Activated T-helper 2 cell treated with anti-CD3 and anti-CD28 coated beads, Interferon-gamma antibody, Interleukin-2, Interleukin-4, amounts not matched to agents 10 μg/mL and 5 μg/mL and 100 μg/mL, durations not matched to agents 14 hours and 24 hours and 36 hours (primary cell): ENCODE measurements at regions of chr21 and their contacts with region 1.

Region 1: GRCh38 chr21:27700974-27701614 is 734.2 kb upstream of the ADAMTS5 start:
- DNase-seq: peak; percentile 37
- H3K4me3 Mint-ChIP-seq: no peak overlapping the region
- H3K27ac Mint-ChIP-seq: no peak overlapping the region
- H3K4me1 Mint-ChIP-seq: no peaks in the 10 kb centered on the region
- H3K27me3 Mint-ChIP-seq: no peaks in the 10 kb centered on the region

Region 2: DNA sequence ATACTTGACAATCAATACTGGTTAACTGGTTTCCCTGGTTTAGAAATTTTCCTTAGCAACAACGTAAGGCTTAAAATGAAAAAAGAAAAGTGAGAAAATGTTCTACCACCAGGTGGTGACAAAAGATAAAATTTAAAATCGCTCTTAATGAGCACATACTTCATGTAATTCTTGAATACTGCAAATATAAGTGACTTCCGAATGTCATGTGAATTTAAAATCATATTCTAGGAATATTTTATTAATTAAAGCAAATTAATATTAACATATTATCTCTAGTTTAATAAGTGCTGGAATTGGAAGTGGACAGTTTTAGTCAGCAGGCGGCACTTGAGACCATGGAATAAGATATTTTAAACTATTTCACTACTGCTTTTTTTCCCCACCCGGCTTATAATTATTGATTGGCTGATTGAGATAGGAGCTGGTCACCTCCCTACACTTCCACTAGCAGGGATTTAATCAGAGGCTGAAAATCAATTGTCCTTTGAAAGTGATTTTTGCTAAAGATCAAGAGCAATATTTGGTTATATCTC is 850.9 kb before region 1 on chr21:
- intact Hi-C with region 1: loop called (anchors 1 kb)
- DNase-seq: no peak
- H3K4me3 Mint-ChIP-seq: no peak overlapping the region
- H3K27ac Mint-ChIP-seq: no peak overlapping the region
- H3K4me1 Mint-ChIP-seq: peaks cover 16% of the 10 kb centered on the region
- H3K27me3 Mint-ChIP-seq: peaks cover 36% of the 10 kb centered on the region

Region 3: DNA sequence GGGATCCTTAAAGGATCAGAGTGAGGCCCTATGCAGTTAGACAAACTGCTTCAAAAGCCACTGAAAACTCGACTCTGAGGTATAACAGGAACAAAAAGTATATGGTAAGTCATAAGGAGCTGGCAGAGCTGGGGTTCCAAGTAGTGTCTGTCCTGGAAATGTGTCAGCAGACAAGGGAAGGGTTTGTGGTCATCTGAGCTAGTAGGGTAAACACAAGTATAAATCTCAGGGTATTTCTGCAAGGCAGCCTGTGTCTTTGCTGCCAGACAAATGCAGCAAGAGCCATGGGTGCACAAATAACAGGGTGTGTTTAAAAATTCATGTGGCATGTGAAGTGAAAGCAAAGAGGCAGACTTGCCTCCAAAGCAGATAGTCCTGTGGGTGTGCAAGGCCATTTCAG is 24.8 kb after region 1 on chr21:
- intact Hi-C with region 1: no loop called
- DNase-seq: no peak
- H3K4me3 Mint-ChIP-seq: no peak overlapping the region
- H3K27ac Mint-ChIP-seq: no peak overlapping the region
- H3K4me1 Mint-ChIP-seq: no peaks in the 10 kb centered on the region
- H3K27me3 Mint-ChIP-seq: no peaks in the 10 kb centered on the region